ENCODE measurements at regions of chr1 and their contacts with region 1.

Region 1: DNA sequence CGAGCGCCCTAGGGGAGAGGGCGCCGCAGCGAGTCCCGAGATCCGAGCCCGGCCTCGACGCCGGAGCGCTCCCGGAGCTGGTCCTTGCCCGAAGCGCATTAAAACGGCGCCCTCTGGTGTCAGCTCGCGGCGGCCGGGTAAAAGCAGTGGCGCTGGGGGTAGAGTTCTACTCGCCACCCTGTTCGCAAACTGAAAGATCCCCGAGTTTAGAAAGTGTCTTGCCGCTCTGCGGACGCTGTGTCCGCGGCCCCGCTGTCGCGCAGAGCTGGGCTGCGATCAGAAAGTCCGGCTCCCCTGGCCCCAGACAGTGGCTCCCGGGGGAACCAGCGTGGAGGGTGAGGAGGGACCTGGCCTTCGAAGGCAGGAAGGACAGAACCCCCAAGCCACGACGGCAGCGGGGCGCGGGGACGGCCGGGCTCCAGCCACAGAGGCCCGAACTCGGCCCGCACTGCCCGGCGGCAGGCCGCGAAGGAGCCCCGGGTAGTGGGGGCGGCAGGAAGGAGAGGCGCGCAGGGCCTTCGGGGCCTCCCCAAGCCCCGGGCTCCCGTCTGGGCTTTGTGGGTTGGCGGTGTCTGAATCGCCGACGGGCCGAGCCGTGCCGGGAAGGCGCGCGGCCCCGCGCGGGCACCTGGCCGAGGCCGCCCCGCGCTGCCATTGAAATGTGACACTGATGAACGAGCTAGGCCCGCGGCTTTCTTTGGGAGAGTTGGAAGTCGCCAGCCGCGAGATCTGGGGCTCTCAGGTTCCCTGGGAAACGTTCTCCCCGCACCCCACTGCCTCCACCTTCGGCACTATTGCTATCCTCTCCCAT is 39.1 kb upstream of the NFIA start:
- DNase-seq: peak; percentile 23
- H3K4me3 ChIP-seq: peak overlapping the region; percentile 47
- H3K27ac ChIP-seq: no peak overlapping the region
- H3K27me3 ChIP-seq: peaks cover 25% of the 10 kb centered on the region
- CTCF ChIP-seq: peak; percentile 81

Region 2: DNA sequence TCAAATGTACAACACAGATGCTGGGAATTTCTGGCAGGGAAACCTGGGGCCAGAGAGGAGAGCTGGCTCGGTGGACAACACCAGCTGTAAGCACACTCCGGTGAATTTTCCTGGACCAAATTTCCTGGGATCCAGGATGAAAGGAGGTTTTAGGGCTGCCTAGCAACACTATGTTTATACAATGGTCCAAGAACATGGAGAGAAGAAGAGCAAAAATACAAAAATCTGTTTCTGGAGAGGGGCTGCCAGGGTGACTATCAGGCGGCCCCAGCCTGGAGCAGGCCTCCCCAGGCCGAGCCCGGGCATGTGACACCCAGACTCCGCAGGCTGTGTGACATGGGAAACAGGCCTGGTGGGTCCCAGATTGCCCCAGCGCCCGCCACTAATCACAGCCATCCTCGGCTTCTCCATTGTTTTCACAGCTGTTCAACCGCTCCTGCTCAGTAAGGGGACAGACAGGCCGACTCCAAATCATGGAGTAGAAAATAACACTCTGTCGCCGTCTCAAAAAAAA is 296.9 kb before region 1 on chr1:
- CTCF ChIA-PET with region 1: no interaction called
- POLR2A ChIA-PET with region 1: no interaction called
- DNase-seq: no peak
- H3K4me3 ChIP-seq: no peak overlapping the region
- H3K27ac ChIP-seq: no peak overlapping the region
- H3K27me3 ChIP-seq: no peaks in the 10 kb centered on the region
- CTCF ChIP-seq: no peak

Region 3: GRCh38 chr1:61190618-61191432 is 147.6 kb after region 1 on chr1:
- CTCF ChIA-PET with region 1: no interaction called
- POLR2A ChIA-PET with region 1: no interaction called
- DNase-seq: no peak
- H3K4me3 ChIP-seq: no peak overlapping the region
- H3K27ac ChIP-seq: no peak overlapping the region
- H3K27me3 ChIP-seq: no peaks in the 10 kb centered on the region
- CTCF ChIP-seq: no peak

Region 4: GRCh38 chr1:61481313-61481712 is 438.1 kb after region 1 on chr1:
- CTCF ChIA-PET with region 1: interaction called, 12 read pairs
- POLR2A ChIA-PET with region 1: no interaction called
- DNase-seq: no peak
- H3K4me3 ChIP-seq: no peak overlapping the region
- H3K27ac ChIP-seq: no peak overlapping the region
- H3K27me3 ChIP-seq: peaks cover 2% of the 10 kb centered on the region
- CTCF ChIP-seq: no peak

Measured in AG04450 (cell line).